Thyroid gland (tissue), 4 donors: ENCODE measurements at regions of chr5 and their contacts with region 1.

Region 1: GRCh38 chr5:170267431-170268152 is 30.0 kb downstream of the LCP2 start:
- DNase-seq: peak; percentile 69 to 81
- H3K4me3 ChIP-seq: no peak overlapping the region
- H3K27ac ChIP-seq: peak overlapping the region in 1 of 3 donors; percentile 23
- H3K4me1 ChIP-seq: peaks cover 3 to 6% of the 10 kb centered on the region in 2 donors
- H3K27me3 ChIP-seq: no peaks in the 10 kb centered on the region
- CTCF ChIP-seq: peak; percentile 63 to 83 (median 73)
- POLR2A ChIP-seq: no peak

Region 2: GRCh38 chr5:170348137-170348633 is 80.6 kb after region 1 on chr5:
- intact Hi-C with region 1: loop called (anchors 10 kb)
- DNase-seq: no peak
- H3K4me3 ChIP-seq: no peak overlapping the region
- H3K27ac ChIP-seq: no peak overlapping the region
- H3K4me1 ChIP-seq: no peaks in the 10 kb centered on the region
- H3K27me3 ChIP-seq: no peaks in the 10 kb centered on the region
- CTCF ChIP-seq: peak in 3 of 6 experiments; percentile 20 to 28 (median 21)
- POLR2A ChIP-seq: no peak

Region 3: DNA sequence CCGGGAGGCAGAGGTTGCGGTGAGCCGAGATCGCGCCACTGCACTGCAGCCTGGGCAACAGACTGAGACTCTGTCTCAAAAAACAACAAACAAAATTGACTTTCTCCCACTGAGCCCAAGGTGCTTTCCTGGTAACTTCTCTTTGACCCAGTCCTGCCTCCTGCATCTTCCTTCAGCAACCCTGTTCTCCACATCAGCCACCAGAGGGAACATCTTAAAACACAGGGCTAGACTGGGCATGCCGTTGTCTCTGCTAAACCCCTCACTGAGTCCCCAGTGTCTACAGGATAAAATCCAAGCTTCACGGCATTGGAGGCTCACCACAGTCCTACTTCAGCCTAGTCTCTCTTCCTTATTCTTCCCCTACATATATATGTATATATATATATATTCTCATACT is 161.4 kb after region 1 on chr5:
- intact Hi-C with region 1: loop called (anchors 5 kb)
- DNase-seq: no peak
- H3K4me3 ChIP-seq: no peak overlapping the region
- H3K27ac ChIP-seq: no peak overlapping the region
- H3K4me1 ChIP-seq: no peaks in the 10 kb centered on the region
- H3K27me3 ChIP-seq: no peaks in the 10 kb centered on the region
- CTCF ChIP-seq: no peak
- POLR2A ChIP-seq: no peak